Gastrocnemius medialis (tissue), 4 donors: ENCODE measurements at regions of chr7 and their contacts with region 1.

Region 1: GRCh38 chr7:92528188-92528957 is at the starts of genes PEX1 and RBM48:
- DNase-seq: peak; percentile 94 to 97
- ATAC-seq: peak; percentile 99
- H3K4me3 ChIP-seq: peak within 1 kb of the TSS; percentile 73 to 96 (median 88)
- H3K27ac ChIP-seq: peak within 1 kb of the TSS; percentile 81 to 90 (median 88)
- H3K4me1 ChIP-seq: peaks cover 18 to 19% of the 10 kb centered on the region in 2 donors
- H3K27me3 ChIP-seq: no peaks in the 10 kb centered on the region
- CTCF ChIP-seq: peak in 4 of 5 experiments; percentile 28 to 56 (median 39)
- POLR2A ChIP-seq: peak; percentile 33 to 52
- total RNA-seq, gene PEX1: 8.0 to 22.3 (median 12.3) TPM
- total RNA-seq, gene RBM48: 8.0 to 11.2 (median 8.8) TPM

Region 2: DNA sequence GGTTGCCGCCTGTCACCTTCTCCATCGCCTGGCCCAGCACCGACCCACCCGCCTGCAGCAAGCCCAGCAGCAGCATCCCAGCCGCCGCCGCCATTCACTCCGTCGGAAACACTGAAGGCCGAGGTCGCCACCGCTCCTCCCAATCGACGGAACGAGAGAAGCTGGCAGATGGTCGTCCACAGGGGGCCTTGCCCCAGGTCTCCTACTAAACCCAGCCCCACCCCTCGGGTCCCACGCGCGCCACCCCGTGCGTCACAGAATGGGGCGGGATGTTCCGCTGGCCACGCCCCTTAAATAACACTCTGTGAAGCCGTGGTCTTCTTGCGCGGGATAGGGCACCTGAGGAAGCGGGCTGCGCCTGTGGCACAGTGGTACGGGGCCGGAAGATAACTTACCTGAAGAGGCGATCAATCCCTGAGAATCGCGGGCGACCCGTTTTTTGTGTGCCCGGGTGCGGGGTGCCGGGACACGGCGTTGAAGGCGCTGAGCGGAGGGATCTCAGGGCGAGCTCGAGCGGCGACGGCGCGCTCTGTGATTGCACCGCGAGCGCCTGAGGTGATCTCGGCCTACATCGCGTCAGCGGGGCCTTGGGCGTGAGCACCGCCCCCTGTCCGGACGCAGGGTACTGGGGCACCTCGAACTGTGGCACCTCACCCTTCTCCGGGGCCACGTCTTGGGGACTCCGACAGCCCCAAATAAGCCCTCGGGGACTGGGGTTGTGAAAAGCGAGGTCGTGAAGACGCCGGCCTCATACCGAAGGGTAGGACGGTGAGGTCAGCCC is 393.9 kb before region 1 on chr7 and contains the start of gene CYP51A1:
- in situ Hi-C with region 1: no loop called
- intact Hi-C with region 1: loop called (anchors 1 kb)
- DNase-seq: peak; percentile 78 to 86
- ATAC-seq: peak; percentile 93
- H3K4me3 ChIP-seq: peak within 1 kb of the TSS; percentile 71 to 92 (median 90)
- H3K27ac ChIP-seq: peak within 1 kb of the TSS; percentile 78 to 92 (median 89)
- H3K4me1 ChIP-seq: peaks cover 5 to 8% of the 10 kb centered on the region in 2 donors
- H3K27me3 ChIP-seq: no peaks in the 10 kb centered on the region
- CTCF ChIP-seq: no peak
- POLR2A ChIP-seq: peak; percentile 71 to 74
- total RNA-seq, gene CYP51A1: 4.7 to 13.3 (median 9.7) TPM

Region 3: DNA sequence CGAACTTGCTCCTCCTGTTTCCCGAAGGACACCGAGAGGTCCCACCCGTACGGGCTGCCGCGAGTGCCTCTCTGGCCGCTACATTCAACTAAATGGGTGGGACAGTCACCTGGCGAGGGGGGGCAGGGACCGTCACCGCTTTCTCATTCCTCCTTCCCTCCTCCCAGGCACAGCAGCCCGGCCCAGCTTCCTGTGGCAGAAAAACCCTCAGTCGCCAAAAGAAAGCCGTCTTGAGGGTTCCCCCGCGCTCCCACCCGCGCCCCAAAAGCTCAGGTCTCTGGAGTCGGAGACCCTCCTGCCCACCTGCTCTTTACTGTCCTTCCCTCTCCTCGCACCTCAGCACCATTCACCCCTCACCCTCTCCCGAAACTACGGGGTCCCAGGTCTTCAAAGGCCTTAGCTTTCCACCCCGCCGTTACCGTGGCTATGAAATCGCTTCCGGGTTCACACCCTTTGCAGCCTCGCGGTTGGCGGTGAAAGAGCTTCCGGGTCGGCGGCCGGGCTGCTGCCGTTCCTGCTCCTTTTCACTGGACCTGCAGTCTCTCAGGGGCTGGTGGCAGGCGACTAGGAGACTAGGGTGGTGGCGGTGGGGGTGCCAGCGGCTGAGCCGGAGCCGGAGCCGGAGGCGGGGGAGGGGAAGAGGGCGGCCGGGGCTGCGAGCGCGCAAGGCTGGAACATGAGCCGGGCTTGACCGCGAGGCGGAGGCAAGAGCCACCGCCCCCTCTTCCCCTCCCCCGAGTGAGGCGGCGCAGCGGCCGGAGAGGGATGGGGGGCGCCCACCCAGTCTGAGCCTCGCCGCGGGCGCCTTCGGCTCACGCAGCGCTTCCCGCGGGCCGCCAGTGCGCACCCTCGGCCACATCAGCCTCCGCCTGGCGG is 282.6 kb before region 1 on chr7 and contains the starts of genes ANKIB1 and KRIT1:
- in situ Hi-C with region 1: loop called in 1 of 4 experiments (anchors 25 kb)
- intact Hi-C with region 1: loop called (anchors 5 kb)
- DNase-seq: peak; percentile 83 to 84
- ATAC-seq: peak; percentile 94 to 97
- H3K4me3 ChIP-seq: peak within 1 kb of the TSS; percentile 81 to 98 (median 84)
- H3K27ac ChIP-seq: peak within 1 kb of the TSS; percentile 86 to 98 (median 94)
- H3K4me1 ChIP-seq: peaks cover 28 to 38% of the 10 kb centered on the region in 2 donors
- H3K27me3 ChIP-seq: no peaks in the 10 kb centered on the region
- CTCF ChIP-seq: peak in 2 of 5 experiments; percentile 26 to 33
- POLR2A ChIP-seq: peak; percentile 39 to 56
- total RNA-seq, gene ANKIB1: 11.5 to 24.2 (median 12.5) TPM
- total RNA-seq, gene KRIT1: 28.7 to 47.6 (median 32.5) TPM

Region 4: DNA sequence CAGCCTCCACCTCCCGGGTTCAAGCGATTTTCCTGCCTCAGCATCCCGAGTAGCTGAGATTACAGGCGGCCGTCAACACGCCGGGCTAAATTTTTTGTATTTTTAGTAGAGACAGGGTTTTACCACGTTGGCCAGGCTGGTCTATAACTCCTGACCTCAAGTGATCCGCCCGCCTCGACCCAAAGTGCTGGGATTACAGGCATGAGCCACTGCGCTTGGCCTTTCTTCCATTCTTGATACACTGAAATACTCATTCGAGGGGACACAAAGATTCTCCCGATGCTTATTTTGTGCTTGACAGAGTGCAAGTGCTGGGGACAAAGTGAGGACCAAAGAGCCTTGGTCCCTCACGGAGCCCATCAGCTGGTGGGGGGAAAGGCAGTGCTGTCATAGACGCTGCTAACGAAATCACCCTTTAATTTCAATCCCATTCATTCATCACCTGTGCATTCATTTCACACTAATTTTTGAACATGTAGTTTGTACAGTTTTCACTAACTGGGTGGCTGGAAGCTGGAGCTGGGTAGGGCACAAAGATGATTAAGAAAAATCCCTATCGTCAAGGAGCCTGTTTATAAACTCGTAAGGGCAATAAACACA is 62.4 kb after region 1 on chr7:
- in situ Hi-C with region 1: no loop called
- intact Hi-C with region 1: loop called (anchors 5 kb)
- DNase-seq: no peak
- ATAC-seq: no peak
- H3K4me3 ChIP-seq: peak overlapping the region; percentile 88 to 95 (median 92)
- H3K27ac ChIP-seq: peak overlapping the region; percentile 84 to 97 (median 87)
- H3K4me1 ChIP-seq: peaks cover 35 to 40% of the 10 kb centered on the region in 2 donors
- H3K27me3 ChIP-seq: no peaks in the 10 kb centered on the region
- CTCF ChIP-seq: no peak
- POLR2A ChIP-seq: no peak

Region 5: DNA sequence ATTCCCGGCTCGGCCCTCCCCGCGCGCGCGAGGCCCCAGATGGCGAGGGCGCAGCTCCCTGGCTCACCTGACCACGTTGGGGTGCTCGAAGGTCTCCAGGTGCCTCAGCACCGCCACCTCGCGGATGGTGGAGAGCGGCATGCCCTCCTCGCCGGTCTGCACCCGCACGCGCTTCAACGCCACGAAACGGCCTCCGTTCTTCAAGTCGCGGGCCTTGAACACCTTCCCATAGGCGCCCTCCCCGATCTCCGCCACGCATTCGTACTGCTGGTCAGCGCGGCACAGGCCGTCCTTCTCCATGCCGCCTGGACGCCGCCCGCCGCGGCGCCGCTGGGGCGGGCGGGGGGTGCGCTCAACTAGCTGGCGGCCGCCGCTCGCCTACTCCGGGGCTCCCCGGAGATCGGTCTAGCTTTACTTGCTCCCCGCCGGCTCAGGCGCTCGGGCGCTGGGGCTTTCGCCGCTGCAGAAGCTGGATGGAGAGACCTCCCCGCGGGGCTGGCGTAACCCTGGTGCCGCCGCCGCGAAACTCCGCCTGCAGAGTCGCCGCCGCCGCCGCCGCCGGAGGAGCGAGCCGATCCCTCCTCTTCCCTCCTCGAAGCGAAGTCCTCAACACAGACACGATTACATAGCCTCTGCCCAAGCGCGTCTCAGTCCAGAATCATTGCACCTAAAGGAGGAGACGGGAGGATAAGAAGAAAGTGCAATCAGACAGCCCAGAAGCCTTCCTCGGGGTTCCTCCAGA is 304.8 kb after region 1 on chr7:
- in situ Hi-C with region 1: no loop called
- intact Hi-C with region 1: loop called (anchors 5 kb)
- DNase-seq: peak; percentile 35 to 46
- ATAC-seq: peak; percentile 51 to 61
- H3K4me3 ChIP-seq: peak overlapping the region; percentile 50 to 81 (median 70)
- H3K27ac ChIP-seq: peak overlapping the region; percentile 74 to 80 (median 76)
- H3K4me1 ChIP-seq: no peaks in the 10 kb centered on the region
- H3K27me3 ChIP-seq: peaks cover 11 to 56% (median 51%) of the 10 kb centered on the region in 3 donors
- CTCF ChIP-seq: peak; percentile 33 to 76 (median 62)
- POLR2A ChIP-seq: peak in 1 of 2 donors; percentile 20